Lower leg skin (tissue), 4 donors: ENCODE measurements at regions of chr21 and their contacts with region 1.

Region 1: GRCh38 chr21:29298348-29299045 is at the start of gene BACH1:
- DNase-seq: peak; percentile 82 to 97
- H3K4me3 ChIP-seq: peak within 1 kb of the TSS; percentile 81
- CTCF ChIP-seq: no peak
- POLR2A ChIP-seq: peak in 1 of 2 donors; percentile 73
- total RNA-seq, gene BACH1: 87.7 to 96.4 (median 91.0) TPM

Region 2: DNA sequence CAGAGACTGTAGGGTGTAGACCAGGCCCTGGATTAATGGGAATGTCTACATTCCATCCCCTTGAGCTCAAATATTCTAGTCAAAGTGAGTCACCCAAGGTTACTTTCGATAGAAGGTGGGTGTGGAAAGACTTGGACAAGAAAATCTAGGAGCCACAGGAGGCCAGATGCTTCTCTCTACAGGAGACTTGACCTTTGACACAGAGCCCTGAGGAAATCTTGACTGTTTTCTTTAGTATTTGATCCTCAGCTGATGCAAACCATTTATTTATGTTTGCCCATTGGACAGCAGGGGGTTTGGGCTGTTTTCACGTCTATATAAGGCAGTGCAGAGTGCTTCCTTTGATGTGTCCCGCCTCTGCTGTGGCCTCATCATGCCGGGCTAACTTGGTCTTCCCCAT is 183.7 kb before region 1 on chr21:
- intact Hi-C with region 1: no loop called
- DNase-seq: no peak
- H3K4me3 ChIP-seq: no peak overlapping the region
- CTCF ChIP-seq: no peak
- POLR2A ChIP-seq: no peak

Region 3: DNA sequence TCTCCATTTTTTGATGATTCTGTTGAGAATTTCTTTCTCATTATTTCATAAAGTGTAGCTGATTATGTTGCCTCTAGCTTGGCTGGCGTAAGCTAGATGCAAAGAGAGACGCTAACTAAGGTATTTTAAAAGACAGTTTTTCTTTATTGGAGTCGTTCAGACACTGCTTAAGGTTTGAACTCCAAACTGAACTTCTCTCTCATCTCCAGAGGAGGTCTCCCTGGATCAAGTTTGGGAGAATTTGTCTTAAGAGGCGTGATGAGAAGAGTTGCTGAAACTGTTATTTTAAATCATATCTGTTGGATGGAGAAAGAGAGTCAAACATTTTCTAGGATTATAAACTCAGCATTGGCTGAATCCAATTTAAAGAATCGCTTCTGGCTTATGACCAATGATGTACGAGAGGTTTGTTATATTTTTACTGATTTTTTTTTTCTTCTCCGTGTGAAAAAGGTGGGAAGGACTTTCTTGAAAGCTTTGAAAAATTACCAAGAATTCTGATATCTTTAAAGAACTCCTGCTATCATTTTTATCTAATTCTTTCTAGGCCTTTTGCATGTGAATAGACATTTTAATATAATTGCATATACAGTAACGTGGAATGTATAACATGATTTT is 134.1 kb before region 1 on chr21:
- intact Hi-C with region 1: loop called (anchors 10 kb)
- DNase-seq: no peak
- H3K4me3 ChIP-seq: no peak overlapping the region
- CTCF ChIP-seq: no peak
- POLR2A ChIP-seq: no peak

Region 4: DNA sequence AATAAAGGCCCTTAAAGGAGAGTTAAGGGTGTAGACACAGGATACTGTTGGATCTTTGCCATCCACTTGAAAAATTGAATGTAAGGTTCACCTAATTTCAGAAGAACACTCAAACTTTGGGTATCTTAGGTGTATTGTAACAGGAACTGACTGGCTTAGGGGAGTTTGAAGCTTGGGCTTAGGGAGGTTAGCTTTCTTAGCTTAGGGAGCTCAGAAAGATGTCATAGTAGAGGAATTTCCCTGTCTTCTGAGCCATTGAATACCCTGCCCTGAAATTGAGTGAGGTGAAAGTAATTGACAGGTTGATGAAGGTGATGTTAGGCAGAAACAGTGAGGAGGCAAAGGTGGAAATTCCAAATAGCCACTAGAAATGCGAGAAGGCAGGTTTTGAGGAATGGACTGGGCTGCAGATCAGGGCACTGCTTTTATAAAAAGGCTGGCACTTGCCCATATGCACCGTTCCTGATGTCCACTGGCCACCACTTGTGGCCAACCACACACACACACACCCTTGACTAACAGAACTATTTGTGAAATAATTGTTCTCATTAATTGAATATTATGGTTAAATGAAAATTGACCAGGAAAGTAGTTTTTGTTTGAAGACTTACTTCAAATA is 16.7 kb after region 1 on chr21:
- intact Hi-C with region 1: no loop called
- DNase-seq: no peak
- H3K4me3 ChIP-seq: no peak overlapping the region
- CTCF ChIP-seq: no peak
- POLR2A ChIP-seq: no peak

Region 5: DNA sequence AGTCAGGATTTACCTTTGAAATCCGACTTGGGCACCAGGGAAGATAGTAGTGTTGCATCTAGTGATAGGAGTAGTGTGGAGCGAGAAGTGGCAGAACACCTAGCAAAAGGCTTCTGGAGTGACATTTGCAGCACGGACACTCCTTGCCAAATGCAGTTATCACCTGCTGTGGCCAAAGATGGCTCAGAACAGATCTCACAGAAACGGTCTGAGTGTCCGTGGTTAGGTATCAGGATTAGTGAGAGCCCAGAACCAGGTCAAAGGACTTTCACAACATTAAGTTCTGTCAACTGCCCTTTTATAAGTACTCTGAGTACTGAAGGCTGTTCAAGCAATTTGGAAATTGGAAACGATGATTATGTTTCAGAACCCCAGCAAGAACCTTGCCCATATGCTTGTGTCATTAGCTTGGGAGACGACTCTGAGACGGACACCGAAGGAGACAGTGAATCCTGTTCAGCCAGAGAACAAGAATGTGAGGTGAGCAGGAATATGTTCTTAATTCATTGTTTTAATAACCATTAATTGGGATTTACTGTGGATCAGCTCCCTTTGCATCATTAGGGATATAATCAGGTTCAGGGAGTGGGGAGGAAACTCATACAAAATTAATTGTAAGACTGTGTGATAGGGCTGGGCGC is 28.5 kb after region 1 on chr21:
- intact Hi-C with region 1: no loop called
- DNase-seq: no peak
- H3K4me3 ChIP-seq: no peak overlapping the region
- CTCF ChIP-seq: no peak
- POLR2A ChIP-seq: no peak